ENCODE measurements at regions of chr17 and their contacts with region 1.

Region 1: DNA sequence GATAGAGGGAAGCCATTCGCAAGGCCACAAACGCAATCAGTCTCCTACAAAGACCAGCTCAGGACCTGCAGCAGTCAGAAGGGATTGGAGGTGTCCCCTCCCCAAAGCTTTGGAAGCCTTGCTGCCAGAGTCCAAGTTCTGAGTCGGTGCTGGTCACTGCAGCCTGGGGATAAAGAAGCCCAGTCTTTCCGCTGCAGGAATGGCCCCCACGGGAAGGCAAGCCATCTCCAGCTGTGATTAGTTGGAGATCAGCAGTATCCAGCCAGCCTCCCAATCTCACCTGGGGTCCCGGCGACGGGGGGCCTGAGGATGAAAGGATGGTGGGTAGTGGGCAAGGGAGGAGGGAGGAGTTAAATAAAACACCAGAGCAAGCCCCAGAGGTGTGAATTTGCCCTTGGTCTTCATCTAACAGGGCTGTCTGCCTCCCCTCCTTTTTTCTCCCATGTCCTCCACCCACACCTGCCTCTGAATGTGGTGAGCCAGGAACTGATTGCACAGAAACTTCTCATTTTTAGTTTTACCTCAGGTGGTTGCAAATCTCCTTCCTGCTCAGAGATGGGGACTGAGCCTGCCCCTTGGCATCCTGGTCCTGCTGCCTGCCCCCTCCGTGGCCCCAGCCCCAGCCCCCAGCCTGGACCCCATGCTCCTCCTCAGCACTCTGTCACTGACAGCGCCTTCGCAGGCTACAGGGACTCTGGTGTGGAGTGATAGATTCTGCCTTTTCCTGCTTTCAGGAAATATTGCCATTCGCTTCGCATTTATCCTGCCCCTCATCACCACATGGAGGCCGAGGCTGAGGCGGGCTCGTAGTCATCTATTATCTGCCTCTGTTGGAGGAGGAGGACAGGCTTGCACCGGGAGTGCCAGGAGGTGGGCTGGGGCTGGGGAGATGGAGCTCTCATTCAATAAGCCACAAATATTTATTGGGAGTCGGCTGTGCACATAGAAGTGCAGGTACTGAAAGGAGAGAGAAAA is 262.9 kb upstream of the SDK2 start:
- DNase-seq: no peak
- H3K4me3 ChIP-seq: no peak overlapping the region
- H3K27ac ChIP-seq: no peak overlapping the region
- H3K4me1 ChIP-seq: no peaks in the 10 kb centered on the region
- H3K27me3 ChIP-seq: peaks cover 5% of the 10 kb centered on the region
- CTCF ChIP-seq: no peak

Region 2: GRCh38 chr17:73820686-73821448 is 86.3 kb before region 1 on chr17:
- CTCF ChIA-PET with region 1: no interaction called
- dilution Hi-C with region 1: loop called (anchors 5 kb)
- in situ Hi-C with region 1: no loop called
- intact Hi-C with region 1: no loop called
- DNase-seq: no peak
- H3K4me3 ChIP-seq: no peak overlapping the region
- H3K27ac ChIP-seq: no peak overlapping the region
- H3K4me1 ChIP-seq: no peaks in the 10 kb centered on the region
- H3K27me3 ChIP-seq: no peaks in the 10 kb centered on the region
- CTCF ChIP-seq: no peak

Region 3: DNA sequence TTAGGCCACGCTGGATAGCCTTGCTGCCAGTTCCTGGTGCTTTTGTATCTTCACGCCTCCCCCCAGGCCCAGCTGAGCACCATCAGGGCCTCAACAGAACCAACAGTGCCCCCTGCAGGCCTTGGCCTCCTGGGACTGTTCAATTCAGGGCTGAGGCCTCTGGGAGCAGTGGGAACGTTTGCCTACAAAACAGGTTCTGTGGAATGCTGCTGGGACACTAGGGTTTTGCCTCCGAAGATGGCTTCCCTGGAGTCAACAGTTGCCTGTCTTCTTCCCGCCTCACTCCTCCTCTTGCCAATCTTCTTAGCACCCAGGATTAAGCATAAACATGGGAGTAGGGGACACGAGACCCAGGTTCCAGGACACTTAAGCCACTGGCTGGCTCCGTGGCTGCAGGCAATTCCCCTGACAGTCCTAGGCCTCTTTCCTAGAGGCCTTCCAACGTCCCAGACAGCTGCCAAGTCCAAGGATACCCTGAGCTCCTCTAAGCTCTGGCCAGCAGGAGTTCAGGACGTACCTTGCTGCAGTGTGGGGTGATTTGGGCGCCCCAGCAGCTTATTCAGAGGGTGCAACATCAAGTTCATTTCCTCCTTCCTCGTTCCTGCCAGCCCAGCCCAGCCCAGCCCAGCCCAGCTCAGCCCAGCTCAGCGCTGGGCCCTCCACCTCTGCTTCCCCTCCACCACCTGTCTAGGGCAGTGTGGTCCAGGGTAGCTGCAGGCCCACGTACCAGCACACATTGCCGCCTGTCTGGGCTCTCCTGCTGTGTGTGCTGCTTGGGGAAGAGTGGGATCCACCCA is 49.7 kb after region 1 on chr17:
- CTCF ChIA-PET with region 1: no interaction called
- dilution Hi-C with region 1: loop called (anchors 5 kb)
- in situ Hi-C with region 1: no loop called
- intact Hi-C with region 1: no loop called
- DNase-seq: peak; percentile 12
- H3K4me3 ChIP-seq: no peak overlapping the region
- H3K27ac ChIP-seq: no peak overlapping the region
- H3K4me1 ChIP-seq: peaks cover 4% of the 10 kb centered on the region
- H3K27me3 ChIP-seq: peaks cover 12% of the 10 kb centered on the region
- CTCF ChIP-seq: peak; percentile 45 to 54

Region 4: DNA sequence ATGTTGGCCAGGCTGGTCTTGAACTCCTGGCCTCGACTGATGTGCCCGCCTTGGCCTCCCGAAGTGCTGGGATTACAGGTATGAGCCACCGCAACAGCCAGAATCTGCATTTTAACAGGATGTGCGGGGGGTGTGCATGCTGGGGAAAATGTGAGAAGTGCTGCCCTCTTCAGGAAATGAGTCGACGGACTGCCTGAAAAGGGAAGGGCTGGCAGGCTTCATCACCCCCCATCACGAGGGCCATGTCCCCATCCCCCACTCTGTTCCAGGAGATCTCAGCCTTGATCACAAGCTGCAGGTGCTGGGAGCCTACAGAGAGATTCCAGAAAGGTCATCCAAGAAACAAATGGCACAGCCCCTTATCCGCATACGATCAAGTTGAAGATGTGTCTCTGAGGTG is 101.0 kb after region 1 on chr17:
- CTCF ChIA-PET with region 1: no interaction called
- dilution Hi-C with region 1: no loop called
- in situ Hi-C with region 1: no loop called
- intact Hi-C with region 1: no loop called
- DNase-seq: no peak
- H3K4me3 ChIP-seq: no peak overlapping the region
- H3K27ac ChIP-seq: no peak overlapping the region
- H3K4me1 ChIP-seq: no peaks in the 10 kb centered on the region
- H3K27me3 ChIP-seq: peaks cover 2% of the 10 kb centered on the region
- CTCF ChIP-seq: peak in 1 of 2 donors; percentile 19

Region 5: GRCh38 chr17:74332763-74333283 is 425.6 kb after region 1 on chr17:
- CTCF ChIA-PET with region 1: no interaction called
- dilution Hi-C with region 1: no loop called
- in situ Hi-C with region 1: no loop called
- intact Hi-C with region 1: no loop called
- DNase-seq: no peak
- H3K4me3 ChIP-seq: no peak overlapping the region
- H3K27ac ChIP-seq: no peak overlapping the region
- H3K4me1 ChIP-seq: no peaks in the 10 kb centered on the region
- H3K27me3 ChIP-seq: peaks cover 2% of the 10 kb centered on the region
- CTCF ChIP-seq: no peak